Panc1 (cell line): ENCODE measurements at regions of chr22 and their contacts with region 1.

Region 1: GRCh38 chr22:21641789-21642583 is at the start of gene SDF2L1:
- DNase-seq: no peak
- ATAC-seq: peak; percentile 95
- H3K4me3 ChIP-seq: peak within 1 kb of the TSS; percentile 69 to 74
- H3K27ac ChIP-seq: peak within 1 kb of the TSS; percentile 87
- H3K4me1 ChIP-seq: peaks cover 8% of the 10 kb centered on the region; the same call in 1 of the 2 replicates
- H3K27me3 ChIP-seq: no peaks in the 10 kb centered on the region
- CTCF ChIP-seq: peak; percentile 45
- total RNA-seq, gene SDF2L1: 66.0 TPM

Region 2: GRCh38 chr22:20916983-20917810 is 724.8 kb before region 1 on chr22 and contains the start of gene CRKL:
- CTCF ChIA-PET with region 1: interaction called, 13 read pairs
- POLR2A ChIA-PET with region 1: no interaction called
- in situ Hi-C with region 1: no loop called
- intact Hi-C with region 1: no loop called
- DNase-seq: peak; percentile 80
- ATAC-seq: peak; percentile 98
- H3K4me3 ChIP-seq: peak within 1 kb of the TSS; percentile 80 to 89
- H3K27ac ChIP-seq: peak within 1 kb of the TSS; percentile 91
- H3K4me1 ChIP-seq: peaks cover 8% of the 10 kb centered on the region; the same call in 1 of the 2 replicates
- H3K27me3 ChIP-seq: no peaks in the 10 kb centered on the region
- CTCF ChIP-seq: peak; percentile 93
- total RNA-seq, gene CRKL: 59.4 TPM

Region 3: GRCh38 chr22:21593406-21594232 is 48.4 kb before region 1 on chr22:
- CTCF ChIA-PET with region 1: interaction called, 3 read pairs
- POLR2A ChIA-PET with region 1: no interaction called
- in situ Hi-C with region 1: no loop called
- intact Hi-C with region 1: loop called (anchors 10 kb)
- DNase-seq: no peak
- ATAC-seq: peak; percentile 79
- H3K4me3 ChIP-seq: no peak overlapping the region
- H3K27ac ChIP-seq: no peak overlapping the region
- H3K4me1 ChIP-seq: peaks cover 8% of the 10 kb centered on the region
- H3K27me3 ChIP-seq: no peaks in the 10 kb centered on the region
- CTCF ChIP-seq: no peak; the same call in 1 of the 2 replicates

Region 4: DNA sequence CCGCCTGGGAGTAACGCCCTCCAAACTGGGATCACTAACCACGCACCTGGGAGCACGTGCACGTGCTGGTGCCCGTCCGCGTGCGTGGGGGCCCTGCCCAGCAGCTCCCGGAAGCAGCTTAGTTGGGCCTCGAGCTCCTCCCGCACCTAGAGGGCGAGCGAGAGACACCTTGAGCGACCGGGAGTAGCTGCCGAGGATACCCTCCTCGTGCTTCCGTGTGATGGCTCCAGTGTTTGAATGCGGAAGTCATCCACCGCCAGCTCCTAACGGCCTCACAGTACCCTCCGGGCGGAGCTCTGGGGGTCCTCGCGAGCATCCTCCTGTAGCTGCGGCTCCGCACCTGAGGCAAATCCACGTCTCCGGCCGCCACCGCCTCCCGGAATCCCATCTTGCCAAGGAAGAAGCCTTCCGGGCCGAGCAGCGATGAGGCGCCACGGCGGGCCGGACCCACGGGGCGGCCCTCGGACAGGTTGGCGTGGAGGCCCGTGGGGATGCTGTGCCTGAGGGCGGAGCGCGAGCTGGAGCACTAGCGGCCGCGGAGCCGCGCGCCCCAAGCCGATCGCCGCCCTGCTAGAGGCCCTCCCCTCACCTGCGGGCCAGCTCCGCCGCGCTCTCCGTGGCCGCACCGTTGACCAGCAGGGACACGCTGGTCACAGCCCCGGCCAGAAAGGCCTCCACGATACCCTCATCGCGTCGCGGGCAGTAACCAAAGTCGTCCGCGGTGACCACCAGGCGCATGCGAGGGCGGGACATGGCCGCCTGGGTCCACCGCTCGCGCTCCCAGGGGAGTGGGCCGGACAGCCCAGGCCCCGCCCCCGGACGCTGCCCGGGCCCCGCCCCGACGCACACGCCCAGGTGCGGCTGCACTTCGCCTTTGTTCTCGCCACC is 12.5 kb before region 1 on chr22 and contains the start of gene YDJC:
- CTCF ChIA-PET with region 1: interaction called, 12 read pairs
- POLR2A ChIA-PET with region 1: interaction called, 5 read pairs
- in situ Hi-C with region 1: no loop called
- intact Hi-C with region 1: no loop called
- DNase-seq: peak; percentile 68
- ATAC-seq: peak; percentile 92
- H3K4me3 ChIP-seq: peak within 1 kb of the TSS; percentile 65 to 86
- H3K27ac ChIP-seq: peak within 1 kb of the TSS; percentile 88
- H3K4me1 ChIP-seq: peaks cover 15% of the 10 kb centered on the region
- H3K27me3 ChIP-seq: no peaks in the 10 kb centered on the region
- CTCF ChIP-seq: no peak; the same call in 1 of the 2 replicates
- total RNA-seq, gene YDJC: 60.6 TPM

Region 5: GRCh38 chr22:21707677-21708076 is 65.7 kb after region 1 on chr22:
- CTCF ChIA-PET with region 1: no interaction called
- POLR2A ChIA-PET with region 1: interaction called, 10 read pairs
- in situ Hi-C with region 1: no loop called
- intact Hi-C with region 1: no loop called
- DNase-seq: no peak
- ATAC-seq: no peak
- H3K4me3 ChIP-seq: no peak overlapping the region
- H3K27ac ChIP-seq: no peak overlapping the region
- H3K4me1 ChIP-seq: no peaks in the 10 kb centered on the region
- H3K27me3 ChIP-seq: no peaks in the 10 kb centered on the region
- CTCF ChIP-seq: no peak